Panc1 (cell line): ENCODE measurements at regions of chr3 and their contacts with region 1.

Region 1: GRCh38 chr3:98130421-98130820 is at the start of gene OR5H1:
- DNase-seq: no peak
- ATAC-seq: no peak
- H3K4me3 ChIP-seq: no peak within 1 kb of the TSS
- H3K27ac ChIP-seq: no peak within 1 kb of the TSS
- H3K4me1 ChIP-seq: no peaks in the 10 kb centered on the region
- H3K27me3 ChIP-seq: no peaks in the 10 kb centered on the region
- CTCF ChIP-seq: no peak
- total RNA-seq, gene OR5H1: not detected

Region 2: GRCh38 chr3:97848779-97849178 is 281.6 kb before region 1 on chr3:
- CTCF ChIA-PET with region 1: no interaction called
- POLR2A ChIA-PET with region 1: no interaction called
- in situ Hi-C with region 1: no loop called
- intact Hi-C with region 1: no loop called
- DNase-seq: no peak
- ATAC-seq: no peak
- H3K4me3 ChIP-seq: no peak overlapping the region
- H3K27ac ChIP-seq: no peak overlapping the region
- H3K4me1 ChIP-seq: no peaks in the 10 kb centered on the region
- H3K27me3 ChIP-seq: no peaks in the 10 kb centered on the region
- CTCF ChIP-seq: no peak

Region 3: DNA sequence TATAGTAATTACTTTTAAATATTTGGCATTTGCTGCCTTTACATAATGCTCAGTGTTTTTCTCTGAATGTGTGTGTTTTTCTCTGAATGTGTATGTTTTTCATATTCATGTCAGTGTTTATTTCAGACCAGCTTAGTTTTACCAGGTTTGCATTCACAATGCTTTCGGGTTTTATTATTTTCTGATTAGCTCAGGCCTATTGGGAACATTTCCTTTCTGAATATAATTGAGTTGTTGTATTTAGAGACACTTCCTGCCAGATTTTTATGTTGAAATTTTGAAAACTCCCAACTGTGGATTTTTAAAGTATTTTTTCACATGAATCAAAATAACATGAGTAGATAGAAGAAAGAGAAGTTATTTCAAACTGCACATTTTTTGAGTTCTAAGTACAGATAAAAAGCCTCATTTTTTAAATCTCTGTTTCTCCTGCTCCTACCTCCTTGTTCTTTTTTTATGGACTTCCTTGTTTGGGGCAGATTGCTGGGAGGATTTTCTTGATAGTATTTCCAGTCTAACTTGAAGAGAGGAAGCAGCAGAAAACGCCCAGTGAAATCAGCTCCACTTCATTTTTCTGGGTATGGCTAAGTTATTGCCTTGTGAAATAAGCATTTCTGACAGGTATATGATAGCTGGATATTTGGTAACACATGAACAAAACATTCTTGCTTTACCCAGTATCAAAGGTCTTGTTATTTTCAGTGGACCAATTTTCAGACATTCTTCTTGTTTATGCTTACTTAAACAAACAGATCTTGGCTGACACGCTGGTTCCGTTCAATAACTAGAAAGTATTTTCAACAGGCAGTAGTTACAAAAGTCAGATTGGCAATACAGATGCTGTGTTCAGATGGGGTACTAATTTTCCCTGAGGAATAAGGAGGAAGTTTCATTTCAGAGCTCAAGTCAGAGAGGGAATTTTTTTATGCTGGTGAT is 228.8 kb before region 1 on chr3:
- CTCF ChIA-PET with region 1: no interaction called
- POLR2A ChIA-PET with region 1: no interaction called
- in situ Hi-C with region 1: no loop called
- intact Hi-C with region 1: no loop called
- DNase-seq: no peak
- ATAC-seq: no peak
- H3K4me3 ChIP-seq: no peak overlapping the region
- H3K27ac ChIP-seq: no peak overlapping the region
- H3K4me1 ChIP-seq: no peaks in the 10 kb centered on the region
- H3K27me3 ChIP-seq: no peaks in the 10 kb centered on the region
- CTCF ChIP-seq: no peak

Region 4: DNA sequence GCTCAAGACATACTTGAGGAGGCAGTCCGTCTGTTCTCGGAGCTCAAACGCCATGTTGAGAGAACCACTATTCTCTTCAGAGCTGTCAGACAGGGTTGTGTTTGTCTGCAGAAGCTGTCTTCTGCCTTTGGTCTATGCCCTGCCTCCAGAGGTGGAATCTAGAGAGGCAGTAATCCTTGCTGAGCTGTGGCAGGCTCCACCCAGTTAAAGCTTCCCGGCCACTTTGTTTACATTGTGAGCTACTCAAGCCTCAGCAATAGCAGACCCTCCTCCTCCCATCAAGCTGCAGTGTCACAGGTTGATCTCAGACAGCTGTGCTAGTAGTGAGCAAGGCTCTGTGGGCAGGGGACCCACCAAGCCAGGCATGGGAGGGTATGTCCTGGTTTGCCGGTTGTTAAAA is 34.6 kb before region 1 on chr3:
- CTCF ChIA-PET with region 1: no interaction called
- POLR2A ChIA-PET with region 1: interaction called, 11 read pairs
- in situ Hi-C with region 1: no loop called
- intact Hi-C with region 1: no loop called
- DNase-seq: no peak
- ATAC-seq: no peak
- H3K4me3 ChIP-seq: no peak overlapping the region
- H3K27ac ChIP-seq: no peak overlapping the region
- H3K4me1 ChIP-seq: no peaks in the 10 kb centered on the region
- H3K27me3 ChIP-seq: no peaks in the 10 kb centered on the region
- CTCF ChIP-seq: no peak

Region 5: GRCh38 chr3:98240131-98240530 is 109.7 kb after region 1 on chr3:
- CTCF ChIA-PET with region 1: no interaction called
- POLR2A ChIA-PET with region 1: no interaction called
- in situ Hi-C with region 1: no loop called
- intact Hi-C with region 1: no loop called
- DNase-seq: no peak
- ATAC-seq: no peak
- H3K4me3 ChIP-seq: no peak overlapping the region
- H3K27ac ChIP-seq: no peak overlapping the region
- H3K4me1 ChIP-seq: no peaks in the 10 kb centered on the region
- H3K27me3 ChIP-seq: no peaks in the 10 kb centered on the region
- CTCF ChIP-seq: no peak